Right ventricle myocardium superior (tissue), 1 donor: ENCODE measurements at regions of chr22 and their contacts with region 1.

Region 1: DNA sequence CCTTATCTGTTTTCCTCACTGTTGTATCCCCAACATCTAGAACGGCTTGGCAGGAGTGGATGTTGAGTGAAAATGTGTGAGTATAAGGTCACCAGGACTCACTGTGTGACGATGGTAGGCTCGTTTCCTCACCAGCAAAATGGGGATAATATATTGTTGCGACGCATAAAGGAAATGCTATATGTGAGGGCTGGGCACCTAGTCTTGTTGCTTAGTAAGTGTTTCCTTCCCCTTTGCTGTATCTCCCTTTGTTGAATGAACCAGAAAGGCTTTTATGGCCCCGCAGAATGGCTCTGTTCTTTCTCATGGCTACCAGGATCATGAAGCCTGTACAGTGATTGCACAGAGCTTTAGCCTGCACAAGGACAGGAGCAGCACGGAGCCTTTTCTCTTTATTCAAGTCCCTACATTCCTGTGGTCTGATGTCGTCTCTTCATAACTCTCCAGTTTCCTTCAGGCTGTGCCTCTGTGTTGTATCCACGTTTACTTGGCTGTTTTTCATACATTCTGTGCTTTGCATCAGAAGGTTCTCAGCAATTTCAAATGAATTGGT is 5.4 kb downstream of the TNRC6B start:
- DNase-seq: no peak
- ATAC-seq: peak; percentile 8

Region 2: DNA sequence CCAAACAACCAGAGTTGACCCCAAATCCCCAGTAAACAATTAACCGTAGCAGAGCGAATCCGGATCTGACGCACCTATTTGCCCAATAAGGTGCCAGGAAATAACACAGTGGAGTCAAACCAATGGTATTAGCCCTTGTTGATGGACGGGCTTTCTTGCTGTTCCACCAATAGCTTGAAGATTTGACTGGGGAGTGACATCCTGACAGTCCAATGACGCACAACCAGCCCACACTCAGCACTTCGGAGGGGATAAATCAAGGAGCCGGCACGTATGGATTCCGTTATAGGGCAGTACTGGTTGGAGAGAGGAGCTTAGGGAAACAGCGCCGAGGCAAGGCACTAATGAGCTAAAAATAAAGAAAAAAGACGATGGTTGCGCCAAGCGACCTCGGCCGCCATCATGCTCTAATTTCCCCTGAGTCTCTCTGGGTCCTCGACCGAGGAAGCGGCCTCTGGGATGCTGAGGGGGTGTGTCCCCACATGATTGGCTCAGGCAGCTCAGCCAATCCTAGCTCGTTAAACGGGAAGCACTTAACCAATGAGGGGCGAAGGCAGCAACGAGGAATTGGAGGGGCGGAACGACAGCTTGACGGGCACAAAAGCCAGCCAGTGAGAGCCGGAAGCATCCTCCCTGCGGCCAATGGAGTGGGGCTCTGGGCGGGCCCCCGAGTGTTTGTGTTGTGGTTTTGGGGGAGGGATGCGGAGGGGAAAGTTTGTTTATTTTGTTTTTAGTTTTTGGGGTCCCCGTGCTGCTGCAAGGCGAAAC is 138.8 kb before region 1 on chr22:
- intact Hi-C with region 1: loop called (anchors 10 kb)
- DNase-seq: peak; percentile 98
- ATAC-seq: peak; percentile 94

Region 3: GRCh38 chr22:40276996-40277823 is 94.1 kb after region 1 on chr22:
- intact Hi-C with region 1: loop called (anchors 10 kb)
- DNase-seq: no peak
- ATAC-seq: peak; percentile 79